MCF 10A (cell line): ENCODE measurements at regions of chr10 and their contacts with region 1.

Region 1: DNA sequence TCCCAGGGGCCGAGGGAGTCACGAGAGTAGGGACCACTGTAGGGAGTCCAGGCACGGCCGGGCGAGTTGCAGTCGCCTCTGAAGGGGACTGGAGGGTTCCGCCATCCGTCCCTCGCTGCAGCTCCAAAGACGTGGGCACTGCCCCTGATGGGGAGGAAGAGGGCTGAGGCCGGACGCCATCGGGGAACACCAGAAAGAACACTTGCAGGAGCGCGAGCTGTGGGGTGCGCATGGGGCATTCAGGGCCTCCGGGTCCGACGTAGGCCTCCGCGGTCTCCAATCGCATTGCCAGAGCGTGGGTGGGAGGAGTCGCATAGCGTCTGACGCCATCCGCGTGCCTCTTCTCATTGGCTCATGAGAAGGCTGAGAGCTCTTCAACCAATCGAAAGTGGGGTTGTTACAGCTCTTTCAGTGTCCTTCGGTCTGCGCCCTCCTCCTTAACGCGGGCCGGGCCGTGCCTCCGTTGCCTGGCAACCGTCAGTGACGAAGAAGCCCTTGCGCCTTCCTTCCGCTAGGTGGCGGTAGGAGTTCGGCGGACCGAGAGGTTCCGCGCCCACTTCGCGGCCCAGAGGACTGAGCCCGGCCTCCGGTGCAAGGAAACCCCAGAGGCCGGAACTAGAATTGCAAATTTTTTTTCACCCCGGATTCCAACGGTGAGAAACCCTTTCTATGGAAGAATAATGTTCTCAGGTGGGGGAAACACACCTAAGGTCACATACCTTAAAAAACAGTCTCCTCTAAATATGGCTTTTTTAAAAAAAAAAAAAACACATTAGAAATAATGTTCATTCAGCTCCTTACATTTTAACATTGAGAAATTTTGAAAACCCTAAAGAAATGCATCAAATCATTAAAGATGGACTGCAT is at the start of gene TCTN3:
- DNase-seq: peak; percentile 100
- H3K4me3 Mint-ChIP-seq: peak within 1 kb of the TSS; percentile 99
- H3K27ac Mint-ChIP-seq: peak within 1 kb of the TSS; percentile 98
- H3K4me1 Mint-ChIP-seq: peaks cover 23% of the 10 kb centered on the region
- H3K27me3 Mint-ChIP-seq: no peaks in the 10 kb centered on the region
- CTCF ChIP-seq: peak; percentile 92
- total RNA-seq, gene TCTN3: 32.5 and 37.3 TPM in 2 replicates

Region 2: DNA sequence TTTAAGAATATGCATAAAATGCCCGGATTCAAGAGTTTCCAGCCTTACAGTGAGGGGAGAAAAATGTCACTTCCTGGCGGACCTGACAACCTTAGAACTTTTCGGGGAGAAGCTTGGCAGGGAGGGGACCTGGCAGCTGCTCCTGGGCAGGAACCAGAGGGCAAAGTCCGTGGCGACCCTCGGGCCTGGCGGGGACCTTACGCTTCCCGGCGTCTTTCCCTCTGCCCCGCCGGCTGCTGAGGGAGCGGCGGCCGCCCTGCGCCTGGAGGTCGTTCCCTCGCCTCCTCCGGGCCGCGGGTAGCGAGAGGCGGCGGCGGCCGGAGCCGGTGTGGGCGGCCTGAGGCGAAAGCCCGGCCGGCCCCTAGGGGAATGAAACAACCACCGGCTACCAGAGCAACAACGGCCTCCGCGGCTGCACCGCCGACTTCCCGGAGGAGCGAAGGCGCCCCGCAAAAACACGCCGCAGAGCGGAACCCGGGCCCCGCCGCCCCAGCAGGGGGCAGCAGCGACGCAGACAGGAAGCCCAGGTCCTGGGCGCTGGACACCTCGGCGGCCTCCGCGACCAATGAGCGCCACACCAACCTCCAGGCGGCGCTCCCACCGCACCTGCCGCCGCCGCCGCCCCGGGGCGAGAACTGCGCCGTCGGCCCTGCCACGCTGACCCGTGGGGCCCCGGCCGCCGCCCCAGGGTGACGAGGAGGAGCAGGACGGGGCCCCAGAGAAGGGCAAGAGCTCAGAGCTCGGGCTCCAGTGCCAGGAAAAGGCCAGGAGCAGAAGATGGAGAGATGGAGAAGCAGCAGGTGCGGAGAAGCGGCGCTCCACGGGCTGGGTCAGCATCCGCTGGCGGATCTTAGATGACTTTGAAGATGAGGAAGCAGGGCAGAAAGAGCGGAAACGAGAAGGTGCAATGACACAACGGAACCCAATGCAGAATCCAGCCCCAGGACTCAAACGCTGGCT is 510.4 kb before region 1 on chr10:
- CTCF ChIA-PET with region 1: no interaction called
- POLR2A ChIA-PET with region 1: no interaction called
- intact Hi-C with region 1: loop called (anchors 5 kb)
- DNase-seq: peak; percentile 80
- H3K4me3 Mint-ChIP-seq: peak overlapping the region; percentile 73
- H3K27ac Mint-ChIP-seq: no peak overlapping the region
- H3K4me1 Mint-ChIP-seq: peaks cover 6% of the 10 kb centered on the region
- H3K27me3 Mint-ChIP-seq: peaks cover 13% of the 10 kb centered on the region
- CTCF ChIP-seq: peak; percentile 96

Region 3: DNA sequence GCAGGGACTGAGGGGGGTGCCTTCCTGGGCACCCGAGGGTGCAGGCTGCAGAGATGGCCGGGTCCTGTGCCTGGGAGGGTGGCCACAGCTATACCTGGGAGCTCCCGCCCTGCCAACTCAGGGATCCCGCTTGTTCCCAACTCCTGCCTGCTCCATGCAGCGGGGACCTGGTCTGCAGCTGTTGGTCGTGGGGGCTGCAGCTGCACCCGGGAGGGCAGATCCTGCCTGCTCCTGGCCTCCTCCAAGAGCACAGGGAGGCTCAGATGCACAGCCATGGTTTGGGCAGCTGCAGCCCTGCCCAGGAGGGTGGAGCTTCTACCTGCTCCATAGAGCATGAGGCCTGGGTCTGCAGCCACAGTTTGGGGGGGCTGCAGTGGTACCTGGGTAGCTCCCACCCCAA is 13.1 kb after region 1 on chr10:
- CTCF ChIA-PET with region 1: interaction called, 26 read pairs
- POLR2A ChIA-PET with region 1: interaction called, 16 read pairs
- intact Hi-C with region 1: no loop called
- DNase-seq: no peak
- H3K4me3 Mint-ChIP-seq: no peak overlapping the region
- H3K27ac Mint-ChIP-seq: no peak overlapping the region
- H3K4me1 Mint-ChIP-seq: peaks cover 6% of the 10 kb centered on the region
- H3K27me3 Mint-ChIP-seq: no peaks in the 10 kb centered on the region
- CTCF ChIP-seq: no peak

Region 4: DNA sequence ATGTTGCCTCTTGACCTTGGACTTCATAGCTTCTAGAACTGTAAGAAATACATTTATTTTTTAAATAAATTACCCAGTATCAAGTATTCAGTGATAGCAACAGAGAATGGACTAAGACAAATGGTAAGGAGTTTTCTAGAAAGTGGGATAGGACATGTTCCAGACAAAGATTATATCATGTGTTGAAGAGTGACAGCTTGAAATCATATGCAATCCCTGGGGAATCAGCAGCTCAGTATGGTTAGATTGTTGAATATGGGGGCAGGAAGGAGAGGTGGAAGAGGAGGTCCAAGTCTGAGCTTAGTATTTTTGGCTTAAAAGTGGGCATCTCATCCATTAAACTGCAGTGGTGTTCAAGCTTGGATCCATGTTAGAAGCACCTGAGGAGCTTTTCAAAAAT is 136.1 kb after region 1 on chr10:
- CTCF ChIA-PET with region 1: interaction called, 12 read pairs
- POLR2A ChIA-PET with region 1: no interaction called
- intact Hi-C with region 1: no loop called
- DNase-seq: no peak
- H3K4me3 Mint-ChIP-seq: no peak overlapping the region
- H3K27ac Mint-ChIP-seq: no peak overlapping the region
- H3K4me1 Mint-ChIP-seq: no peaks in the 10 kb centered on the region
- H3K27me3 Mint-ChIP-seq: no peaks in the 10 kb centered on the region
- CTCF ChIP-seq: no peak

Region 5: GRCh38 chr10:95864906-95865813 is 171.3 kb after region 1 on chr10:
- CTCF ChIA-PET with region 1: interaction called, 61 read pairs
- POLR2A ChIA-PET with region 1: interaction called, 20 read pairs
- intact Hi-C with region 1: loop called (anchors 1 kb)
- DNase-seq: peak; percentile 76
- H3K4me3 Mint-ChIP-seq: no peak overlapping the region
- H3K27ac Mint-ChIP-seq: no peak overlapping the region
- H3K4me1 Mint-ChIP-seq: peaks cover 4% of the 10 kb centered on the region
- H3K27me3 Mint-ChIP-seq: no peaks in the 10 kb centered on the region
- CTCF ChIP-seq: peak; percentile 29

Region 6: DNA sequence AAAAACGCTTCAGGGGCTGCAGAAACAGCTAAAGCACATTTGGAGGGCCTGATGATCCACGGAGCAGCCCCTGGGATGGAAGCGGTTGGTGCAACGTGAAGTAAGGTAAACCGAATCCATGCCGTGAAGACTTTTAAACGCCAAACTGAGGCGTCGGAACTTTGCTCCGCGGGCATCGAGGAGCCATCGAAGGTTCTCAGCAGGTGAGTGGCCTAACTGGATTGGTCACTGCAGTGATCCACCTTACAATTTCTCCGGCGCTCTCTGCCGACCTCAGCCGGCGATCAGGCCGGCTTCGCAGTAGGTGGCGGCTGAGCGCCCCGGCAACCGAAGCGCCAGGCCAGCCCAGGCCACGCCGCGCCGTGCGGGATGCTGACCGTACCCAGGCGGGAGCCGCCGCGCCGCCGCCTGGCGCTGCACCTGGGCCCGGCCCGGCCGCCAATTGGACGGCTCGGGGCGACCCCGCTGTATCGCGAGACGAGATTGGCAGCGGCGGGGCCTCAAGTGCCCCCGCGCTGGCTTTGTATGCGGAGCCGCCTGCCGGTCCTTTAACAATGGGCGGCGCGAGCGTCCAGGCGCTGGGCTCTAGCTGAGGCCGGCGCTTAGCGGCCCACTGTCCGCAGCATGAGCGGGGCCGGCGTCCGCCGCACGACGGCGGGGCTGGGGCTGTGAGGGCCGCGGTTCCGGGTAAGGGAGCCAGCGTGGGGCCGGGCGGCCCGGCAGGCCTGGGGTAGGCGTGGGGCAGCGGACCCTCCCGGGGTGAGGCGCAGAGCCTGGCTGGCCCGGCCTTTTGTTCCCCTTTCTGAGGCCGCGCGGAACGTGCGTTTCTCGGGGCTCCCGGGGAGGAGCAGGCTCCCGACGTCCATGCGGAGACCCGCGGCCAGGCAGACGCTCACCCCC is 349.4 kb after region 1 on chr10 and contains the start of gene CCNJ:
- CTCF ChIA-PET with region 1: interaction called, 5 read pairs
- POLR2A ChIA-PET with region 1: interaction called, 5 read pairs
- intact Hi-C with region 1: loop called (anchors 5 kb)
- DNase-seq: peak; percentile 90
- H3K4me3 Mint-ChIP-seq: peak within 1 kb of the TSS; percentile 91
- H3K27ac Mint-ChIP-seq: peak within 1 kb of the TSS; percentile 94
- H3K4me1 Mint-ChIP-seq: peaks cover 26% of the 10 kb centered on the region
- H3K27me3 Mint-ChIP-seq: peaks cover 8% of the 10 kb centered on the region
- CTCF ChIP-seq: peak; percentile 6
- total RNA-seq, gene CCNJ: 9.3 and 10.8 TPM in 2 replicates

Region 7: GRCh38 chr10:96292971-96293920 is 599.3 kb after region 1 on chr10:
- CTCF ChIA-PET with region 1: interaction called, 16 read pairs
- POLR2A ChIA-PET with region 1: no interaction called
- intact Hi-C with region 1: no loop called
- DNase-seq: peak; percentile 61
- H3K4me3 Mint-ChIP-seq: no peak overlapping the region
- H3K27ac Mint-ChIP-seq: no peak overlapping the region
- H3K4me1 Mint-ChIP-seq: no peaks in the 10 kb centered on the region
- H3K27me3 Mint-ChIP-seq: peaks cover 8% of the 10 kb centered on the region
- CTCF ChIP-seq: peak; percentile 43